Activated CD8-positive, alpha-beta T cell treated with anti-CD3 and anti-CD28 coated beads, Interleukin-2, amount 10 ng/mL, durations not matched to agents 7 days and 5 days (primary cell): ENCODE measurements at regions of chr13 and their contacts with region 1.

Region 1: DNA sequence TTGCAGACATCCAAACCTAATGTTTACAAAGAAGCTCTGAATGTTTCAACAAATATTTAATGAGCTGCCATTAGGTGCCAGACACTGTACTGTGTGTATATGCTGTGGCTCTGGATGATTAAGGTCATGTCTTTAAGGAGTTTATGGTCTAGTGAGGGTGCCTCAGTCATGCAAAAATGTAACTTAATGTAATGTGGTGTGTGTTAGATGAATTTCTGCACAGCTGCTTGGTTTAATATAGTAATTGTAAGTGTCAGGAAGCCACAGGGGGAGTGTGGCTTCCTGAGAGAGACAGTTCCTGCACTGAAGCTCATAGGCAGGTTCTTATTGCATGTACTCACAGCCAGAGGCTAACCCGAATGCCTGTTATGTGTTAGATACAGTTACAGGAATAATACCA is 43.3 kb downstream of the SPATA13 start:
- DNase-seq: peak; percentile 54
- ATAC-seq: peak; percentile 99
- H3K4me3 Mint-ChIP-seq: peak overlapping the region; percentile 56
- H3K27ac Mint-ChIP-seq: peak overlapping the region; percentile 80
- H3K4me1 Mint-ChIP-seq: peaks cover 42% of the 10 kb centered on the region
- H3K27me3 Mint-ChIP-seq: no peaks in the 10 kb centered on the region

Region 2: GRCh38 chr13:24192057-24192810 is 11.6 kb before region 1 on chr13:
- CTCF ChIA-PET with region 1: interaction called, 16 read pairs
- POLR2A ChIA-PET with region 1: no interaction called
- DNase-seq: no peak
- ATAC-seq: no peak
- H3K4me3 Mint-ChIP-seq: no peak overlapping the region
- H3K27ac Mint-ChIP-seq: no peak overlapping the region
- H3K4me1 Mint-ChIP-seq: peaks cover 14% of the 10 kb centered on the region
- H3K27me3 Mint-ChIP-seq: no peaks in the 10 kb centered on the region